ENCODE measurements at regions of chr3 and their contacts with region 1.

Region 1: DNA sequence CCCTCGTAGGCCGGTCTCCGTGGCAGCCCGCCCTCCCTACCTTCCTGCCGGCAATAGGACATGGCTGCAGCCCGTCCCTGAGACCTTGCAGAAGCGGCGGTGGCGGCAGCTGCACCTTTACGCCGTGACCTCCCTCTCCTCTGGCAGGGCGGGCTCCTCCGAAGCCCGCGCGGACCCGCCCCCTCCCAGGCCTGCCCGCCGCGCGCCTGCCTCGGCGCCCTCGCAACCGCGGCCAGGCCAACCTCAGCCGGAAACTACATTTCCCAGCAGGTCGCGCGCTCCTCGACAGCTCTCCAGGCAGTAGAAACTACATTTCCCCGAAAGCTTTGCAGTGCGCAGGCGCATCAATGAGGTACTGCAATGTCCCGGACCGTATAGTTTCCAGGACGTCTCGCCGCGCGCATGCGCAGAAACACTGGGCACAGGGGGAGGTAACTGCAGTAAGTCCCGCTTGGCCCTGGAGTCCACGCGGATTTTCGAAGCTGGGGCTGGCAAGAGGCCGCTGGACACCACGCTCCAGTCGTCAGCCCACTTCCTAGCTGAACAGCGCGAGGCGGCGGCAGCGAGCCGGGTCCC is at the starts of genes CHCHD4 and TMEM43:
- DNase-seq: peak; percentile 99
- H3K4me3 ChIP-seq: peak within 1 kb of the TSS; percentile 74 to 77
- H3K27ac ChIP-seq: peak within 1 kb of the TSS; percentile 89 to 90
- H3K4me1 ChIP-seq: peaks cover 20% of the 10 kb centered on the region
- H3K27me3 ChIP-seq: no peaks in the 10 kb centered on the region
- CTCF ChIP-seq: peak in 2 of 4 experiments; percentile 27 to 35
- POLR2A ChIP-seq: peak; percentile 85
- total RNA-seq, gene CHCHD4: 12.1 to 14.8 TPM
- total RNA-seq, gene TMEM43: 56.8 to 80.5 TPM

Region 2: DNA sequence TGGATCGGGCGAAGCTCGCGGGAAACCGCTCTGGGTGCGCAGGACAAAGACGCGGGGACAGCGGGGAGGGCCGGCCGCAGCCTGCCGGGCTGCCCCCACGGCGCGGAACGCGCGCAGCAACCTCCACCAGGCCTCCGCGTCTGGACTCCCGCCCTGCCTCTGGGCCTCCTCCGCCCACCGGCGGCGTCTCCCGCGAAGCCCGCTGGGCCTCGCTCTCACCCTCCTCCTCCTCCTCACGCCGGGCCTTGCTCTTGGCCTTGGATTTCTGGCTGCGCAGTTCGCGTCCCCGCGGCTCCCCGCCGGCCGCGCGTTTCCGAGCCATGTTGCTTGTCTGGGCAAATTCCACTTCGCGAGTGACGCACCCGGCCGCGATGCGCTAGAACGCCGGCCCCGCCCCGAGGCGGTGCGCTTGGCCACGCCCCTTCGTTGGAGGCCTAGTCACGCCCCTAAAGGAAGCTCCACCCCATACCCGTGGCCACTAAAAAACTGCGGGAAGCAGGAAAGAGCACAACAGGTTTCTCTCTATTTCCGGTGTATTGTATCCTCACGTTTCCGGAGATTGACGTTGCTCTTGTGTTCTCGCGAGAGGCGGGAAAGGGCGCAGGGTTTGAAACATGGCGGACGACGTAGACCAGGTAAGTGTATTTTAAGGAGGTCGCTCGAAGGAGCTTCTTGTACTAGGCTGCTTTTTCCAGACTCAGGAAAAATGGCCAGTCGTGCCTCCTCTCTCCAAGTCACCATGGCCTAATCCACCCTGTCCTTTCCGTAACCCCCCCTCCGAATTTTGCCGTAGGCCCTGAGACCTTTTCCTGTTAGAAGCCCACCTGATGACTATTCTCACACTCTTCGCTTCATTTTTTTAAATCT is 53.8 kb after region 1 on chr3 and contains the starts of genes LSM3 and XPC:
- intact Hi-C with region 1: loop called (anchors 2 kb)
- DNase-seq: peak; percentile 98
- H3K4me3 ChIP-seq: peak within 1 kb of the TSS; percentile 77 to 93
- H3K27ac ChIP-seq: peak within 1 kb of the TSS; percentile 88 to 95
- H3K4me1 ChIP-seq: peaks cover 8% of the 10 kb centered on the region
- H3K27me3 ChIP-seq: no peaks in the 10 kb centered on the region
- CTCF ChIP-seq: peak in 2 of 4 experiments; percentile 18 to 27
- POLR2A ChIP-seq: peak; percentile 99
- total RNA-seq, gene LSM3: 15.0 to 15.1 TPM
- total RNA-seq, gene XPC: 41.1 to 53.2 TPM

Region 3: GRCh38 chr3:14740983-14741382 is 616.3 kb after region 1 on chr3:
- intact Hi-C with region 1: no loop called
- DNase-seq: no peak
- H3K4me3 ChIP-seq: no peak overlapping the region
- H3K27ac ChIP-seq: no peak overlapping the region
- H3K4me1 ChIP-seq: no peaks in the 10 kb centered on the region
- H3K27me3 ChIP-seq: no peaks in the 10 kb centered on the region
- CTCF ChIP-seq: no peak
- POLR2A ChIP-seq: no peak